Caki2 (cell line): ENCODE measurements at regions of chr13 and their contacts with region 1.

Region 1: GRCh38 chr13:97295283-97296182 is 73.4 kb downstream of the MBNL2 start:
- DNase-seq: peak; percentile 70

Region 2: GRCh38 chr13:97004096-97004876 is 291.2 kb before region 1 on chr13:
- in situ Hi-C with region 1: no loop called
- DNase-seq: no peak

Region 3: DNA sequence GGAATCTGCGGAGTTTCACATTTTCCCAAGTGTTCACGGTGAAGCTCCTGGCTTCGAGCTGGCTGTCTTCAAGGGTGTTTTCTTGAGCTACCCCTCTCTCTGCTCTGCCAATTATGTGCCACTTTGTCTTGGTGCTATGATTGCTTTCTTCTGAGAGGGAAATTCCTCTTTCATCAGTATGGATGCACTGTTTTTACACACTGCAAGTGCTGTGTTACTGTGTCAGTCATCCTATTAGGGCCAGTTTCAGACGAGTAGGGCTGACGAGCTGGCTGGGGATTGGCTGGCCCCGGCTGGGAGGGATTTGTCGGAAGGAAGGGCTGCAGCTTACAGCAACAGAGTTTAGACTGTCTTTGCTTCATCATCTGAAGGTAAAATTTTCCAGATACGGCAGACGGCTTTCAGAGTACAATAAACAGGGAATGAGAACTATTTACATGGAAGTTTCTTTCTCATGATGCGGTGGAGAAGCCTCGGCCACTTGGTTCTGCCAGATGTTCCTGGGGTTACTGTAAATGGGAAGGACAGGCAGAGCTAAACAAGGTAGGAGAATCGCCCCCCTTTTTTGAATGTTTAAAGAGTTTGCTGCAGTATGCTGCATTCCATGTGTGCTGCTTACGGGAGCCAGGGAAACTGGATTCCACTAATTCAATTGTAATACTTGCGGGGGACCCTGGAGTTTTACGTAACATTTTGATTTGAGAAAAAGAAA is 73.4 kb before region 1 on chr13 and contains the start of gene MBNL2:
- in situ Hi-C with region 1: loop called (anchors 10 kb)
- DNase-seq: peak; percentile 85
- total RNA-seq, gene MBNL2: 9.6 and 14.0 TPM in 2 replicates